Activated CD4-positive, alpha-beta T cell treated with anti-CD3 and anti-CD28 coated beads for 36 hours (primary cell): ENCODE measurements at regions of chr17 and their contacts with region 1.

Region 1: GRCh38 chr17:21214015-21214776 is at the start of gene TMEM11:
- DNase-seq: peak; percentile 98
- ATAC-seq: peak; percentile 96
- H3K4me3 Mint-ChIP-seq: peak within 1 kb of the TSS; percentile 82
- H3K27ac Mint-ChIP-seq: peak within 1 kb of the TSS; percentile 93
- H3K4me1 Mint-ChIP-seq: peaks cover 70% of the 10 kb centered on the region
- H3K27me3 Mint-ChIP-seq: no peaks in the 10 kb centered on the region
- total RNA-seq, gene TMEM11: 28.9 to 40.4 TPM

Region 2: GRCh38 chr17:21098934-21099689 is 115.1 kb before region 1 on chr17:
- CTCF ChIA-PET with region 1: interaction called, 3 read pairs
- POLR2A ChIA-PET with region 1: interaction called, 4 read pairs
- intact Hi-C with region 1: loop called in 1 of 2 experiments (anchors 1 kb)
- DNase-seq: peak; percentile 89
- ATAC-seq: peak; percentile 99
- H3K4me3 Mint-ChIP-seq: peak overlapping the region; percentile 94
- H3K27ac Mint-ChIP-seq: peak overlapping the region; percentile 92
- H3K4me1 Mint-ChIP-seq: peaks cover 2% of the 10 kb centered on the region
- H3K27me3 Mint-ChIP-seq: no peaks in the 10 kb centered on the region

Region 3: GRCh38 chr17:21126645-21127510 is 87.3 kb before region 1 on chr17 and contains the start of gene DHRS7B:
- CTCF ChIA-PET with region 1: interaction called, 6 read pairs
- POLR2A ChIA-PET with region 1: no interaction called
- intact Hi-C with region 1: loop called (anchors 1 kb)
- DNase-seq: peak; percentile 98
- ATAC-seq: peak; percentile 96
- H3K4me3 Mint-ChIP-seq: peak within 1 kb of the TSS; percentile 91
- H3K27ac Mint-ChIP-seq: peak within 1 kb of the TSS; percentile 98
- H3K4me1 Mint-ChIP-seq: peaks cover 23% of the 10 kb centered on the region
- H3K27me3 Mint-ChIP-seq: no peaks in the 10 kb centered on the region
- total RNA-seq, gene DHRS7B: 12.8 to 15.0 TPM

Region 4: GRCh38 chr17:21252796-21253645 is 38.8 kb after region 1 on chr17 and contains the start of gene NATD1:
- CTCF ChIA-PET with region 1: no interaction called
- POLR2A ChIA-PET with region 1: no interaction called
- intact Hi-C with region 1: loop called (anchors 1 kb)
- DNase-seq: peak; percentile 86
- ATAC-seq: peak; percentile 71
- H3K4me3 Mint-ChIP-seq: peak within 1 kb of the TSS; percentile 77
- H3K27ac Mint-ChIP-seq: peak within 1 kb of the TSS; percentile 47
- H3K4me1 Mint-ChIP-seq: peaks cover 6% of the 10 kb centered on the region
- H3K27me3 Mint-ChIP-seq: no peaks in the 10 kb centered on the region
- total RNA-seq, gene NATD1: 1.5 to 1.7 TPM

Region 5: GRCh38 chr17:21296091-21297025 is 82.2 kb after region 1 on chr17:
- CTCF ChIA-PET with region 1: no interaction called
- POLR2A ChIA-PET with region 1: no interaction called
- intact Hi-C with region 1: no loop called
- DNase-seq: no peak
- ATAC-seq: no peak
- H3K4me3 Mint-ChIP-seq: no peak overlapping the region
- H3K27ac Mint-ChIP-seq: no peak overlapping the region
- H3K4me1 Mint-ChIP-seq: peaks cover 4% of the 10 kb centered on the region
- H3K27me3 Mint-ChIP-seq: peaks cover 2% of the 10 kb centered on the region

Region 6: DNA sequence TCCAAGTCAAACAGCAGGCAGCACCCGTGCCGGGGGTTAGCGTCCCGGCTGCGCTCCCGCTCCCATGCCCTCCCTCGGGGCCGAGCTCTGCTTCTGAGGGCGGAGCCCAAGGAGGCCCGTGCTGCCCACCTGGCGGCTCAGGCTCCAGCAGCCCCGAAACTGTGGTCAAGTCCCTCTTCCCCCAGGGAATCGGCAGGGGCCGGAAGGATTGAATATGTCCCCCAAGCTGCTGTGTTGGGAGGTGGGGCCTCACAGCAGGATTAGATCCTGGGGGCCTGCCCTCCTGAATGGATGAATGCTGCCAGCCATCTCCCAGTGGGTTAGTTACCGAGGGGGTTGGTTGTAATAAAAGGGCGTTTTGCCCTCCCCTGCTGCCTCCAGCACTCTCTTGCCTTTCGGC is 104.2 kb after region 1 on chr17:
- CTCF ChIA-PET with region 1: no interaction called
- POLR2A ChIA-PET with region 1: no interaction called
- intact Hi-C with region 1: loop called in 1 of 2 experiments (anchors 5 kb)
- DNase-seq: no peak
- ATAC-seq: no peak
- H3K4me3 Mint-ChIP-seq: no peak overlapping the region
- H3K27ac Mint-ChIP-seq: no peak overlapping the region
- H3K4me1 Mint-ChIP-seq: peaks cover 7% of the 10 kb centered on the region
- H3K27me3 Mint-ChIP-seq: no peaks in the 10 kb centered on the region

Region 7: DNA sequence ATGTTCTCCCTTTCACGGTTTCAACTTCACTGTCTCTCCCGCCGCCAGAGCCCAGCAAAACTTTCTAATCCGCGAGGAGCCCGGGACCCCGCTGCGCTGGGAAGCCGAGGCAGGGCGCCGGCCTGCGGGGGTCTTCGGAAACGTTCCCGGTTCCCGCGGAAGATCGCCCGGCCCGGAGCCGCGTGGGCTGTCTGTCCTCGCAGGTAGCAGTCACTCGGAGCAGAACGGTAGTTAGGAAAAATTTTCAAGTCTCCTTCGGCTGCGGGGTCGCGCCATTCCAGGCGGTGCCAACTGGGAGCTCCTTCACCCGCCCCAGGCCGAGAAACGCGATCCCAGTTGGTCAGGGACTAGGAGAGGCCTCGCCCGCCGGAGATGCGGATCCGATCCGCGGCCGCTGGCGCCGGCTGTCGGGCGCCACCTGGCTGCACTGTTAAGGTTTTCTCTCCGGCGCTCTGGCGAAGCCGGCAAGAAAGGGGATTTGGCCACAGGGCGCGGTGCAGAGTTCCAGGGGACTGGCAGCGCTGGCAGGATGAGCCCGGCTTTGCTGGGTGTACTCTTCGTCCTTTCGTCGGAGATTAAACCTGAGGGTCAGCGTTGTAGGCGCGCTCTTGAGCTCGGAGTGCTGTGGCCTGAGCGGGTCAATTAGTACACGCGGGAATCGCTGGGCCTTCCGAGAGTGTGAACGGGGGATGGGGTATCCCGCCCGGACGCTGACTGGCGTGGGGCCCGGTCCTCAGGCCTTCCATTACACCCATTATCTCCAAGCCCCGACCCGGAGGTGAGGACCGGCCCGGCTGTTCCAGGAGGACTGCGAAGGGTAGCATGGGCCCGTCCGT is 297.4 kb after region 1 on chr17:
- CTCF ChIA-PET with region 1: interaction called, 3 read pairs
- POLR2A ChIA-PET with region 1: no interaction called
- intact Hi-C with region 1: loop called in 1 of 2 experiments (anchors 5 kb)
- DNase-seq: peak; percentile 82
- ATAC-seq: peak; percentile 87
- H3K4me3 Mint-ChIP-seq: peak overlapping the region; percentile 60
- H3K27ac Mint-ChIP-seq: no peak overlapping the region
- H3K4me1 Mint-ChIP-seq: peaks cover 14% of the 10 kb centered on the region
- H3K27me3 Mint-ChIP-seq: peaks cover 31% of the 10 kb centered on the region